Sigmoid colon (tissue), 7 donors: ENCODE measurements at regions of chr7 and their contacts with region 1.

Region 1: DNA sequence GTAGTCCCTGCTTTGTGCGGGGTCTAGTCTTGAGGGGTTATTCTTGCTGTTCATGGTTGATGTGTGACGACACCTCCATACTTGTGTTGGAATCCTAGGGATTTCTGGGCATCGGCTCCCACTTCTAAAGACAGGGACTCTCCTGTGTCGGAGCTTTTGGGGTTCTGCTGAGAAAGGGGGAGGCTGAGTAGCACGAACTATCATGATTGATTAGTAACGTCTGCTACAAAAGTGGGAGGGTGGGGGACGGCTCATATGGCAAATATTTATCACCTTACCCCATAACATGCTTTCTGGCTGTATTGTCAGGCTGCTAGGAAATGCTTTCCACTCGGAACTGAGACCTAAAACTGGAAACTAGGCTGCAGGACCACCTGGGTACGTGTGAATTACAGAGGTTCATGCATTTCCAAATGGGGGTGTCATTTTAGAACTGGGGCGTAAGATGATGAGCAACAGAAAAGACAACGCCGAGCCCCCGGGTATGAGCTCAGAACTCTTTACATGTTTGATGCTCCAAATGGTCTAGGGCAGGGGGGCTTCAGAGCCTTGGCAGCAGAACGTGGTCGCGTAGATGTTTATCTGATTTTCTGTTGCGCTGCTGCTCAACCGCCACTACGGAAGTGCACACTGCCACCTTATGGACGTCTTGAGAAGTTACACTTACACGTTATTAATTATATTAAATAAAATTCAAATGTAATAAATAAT is 15.1 kb upstream of the NME8 start:
- DNase-seq: peak; percentile 66
- H3K4me3 ChIP-seq: peak overlapping the region in 3 of 4 donors; percentile 26 to 32 (median 30)
- H3K27ac ChIP-seq: no peak overlapping the region
- H3K4me1 ChIP-seq: peaks cover 0 to 5% (median 0%) of the 10 kb centered on the region in 4 donors
- H3K27me3 ChIP-seq: no peaks in the 10 kb centered on the region
- CTCF ChIP-seq: peak in 3 of 4 experiments; percentile 35 to 68 (median 46)
- EP300 ChIP-seq: no peak
- POLR2A ChIP-seq: no peak

Region 2: DNA sequence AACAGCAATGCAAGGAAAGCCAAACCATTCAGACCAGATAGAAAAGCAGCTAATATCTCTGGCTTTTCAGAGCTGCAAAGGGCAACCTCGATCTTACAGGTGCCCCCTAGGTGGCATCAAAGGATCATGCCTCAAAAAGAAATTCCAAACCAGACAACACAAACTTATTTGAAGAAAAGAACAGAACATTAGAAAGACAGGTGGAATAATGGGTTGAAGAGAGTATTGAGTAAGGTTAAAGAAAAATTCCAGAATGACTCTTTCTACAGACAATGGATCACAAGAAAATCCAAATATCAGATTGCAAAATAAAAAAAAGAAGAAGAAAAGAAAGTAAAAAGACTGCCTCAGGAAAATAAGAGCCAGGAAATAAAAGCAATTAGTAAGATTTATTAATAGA is 598.3 kb before region 1 on chr7:
- intact Hi-C with region 1: loop called (anchors 10 kb)
- DNase-seq: no peak
- H3K4me3 ChIP-seq: no peak overlapping the region
- H3K27ac ChIP-seq: no peak overlapping the region
- H3K4me1 ChIP-seq: peaks cover 0 to 7% (median 0%) of the 10 kb centered on the region in 4 donors
- H3K27me3 ChIP-seq: no peaks in the 10 kb centered on the region
- CTCF ChIP-seq: peak in 1 of 4 experiments; percentile 30
- EP300 ChIP-seq: no peak
- POLR2A ChIP-seq: no peak

Region 3: GRCh38 chr7:38451840-38452239 is 618.6 kb after region 1 on chr7:
- intact Hi-C with region 1: no loop called
- DNase-seq: no peak
- H3K4me3 ChIP-seq: no peak overlapping the region
- H3K27ac ChIP-seq: no peak overlapping the region
- H3K4me1 ChIP-seq: peaks cover 0 to 22% (median 6%) of the 10 kb centered on the region in 4 donors
- H3K27me3 ChIP-seq: no peaks in the 10 kb centered on the region
- CTCF ChIP-seq: no peak
- EP300 ChIP-seq: no peak
- POLR2A ChIP-seq: no peak